ENCODE measurements at regions of chr16 and their contacts with region 1.

Region 1: GRCh38 chr16:50373780-50374179 is 5.0 kb upstream of the BRD7 start:
- DNase-seq: no peak
- H3K4me3 ChIP-seq: no peak overlapping the region
- H3K4me3 Mint-ChIP-seq: no peak overlapping the region
- H3K27ac Mint-ChIP-seq: no peak overlapping the region
- H3K4me1 ChIP-seq: peaks cover 10% of the 10 kb centered on the region; the same call in 1 of the 2 replicates
- H3K4me1 Mint-ChIP-seq: peaks cover 18% of the 10 kb centered on the region
- H3K27me3 ChIP-seq: no peaks in the 10 kb centered on the region
- H3K27me3 Mint-ChIP-seq: no peaks in the 10 kb centered on the region
- CTCF ChIP-seq: no peak

Region 2: DNA sequence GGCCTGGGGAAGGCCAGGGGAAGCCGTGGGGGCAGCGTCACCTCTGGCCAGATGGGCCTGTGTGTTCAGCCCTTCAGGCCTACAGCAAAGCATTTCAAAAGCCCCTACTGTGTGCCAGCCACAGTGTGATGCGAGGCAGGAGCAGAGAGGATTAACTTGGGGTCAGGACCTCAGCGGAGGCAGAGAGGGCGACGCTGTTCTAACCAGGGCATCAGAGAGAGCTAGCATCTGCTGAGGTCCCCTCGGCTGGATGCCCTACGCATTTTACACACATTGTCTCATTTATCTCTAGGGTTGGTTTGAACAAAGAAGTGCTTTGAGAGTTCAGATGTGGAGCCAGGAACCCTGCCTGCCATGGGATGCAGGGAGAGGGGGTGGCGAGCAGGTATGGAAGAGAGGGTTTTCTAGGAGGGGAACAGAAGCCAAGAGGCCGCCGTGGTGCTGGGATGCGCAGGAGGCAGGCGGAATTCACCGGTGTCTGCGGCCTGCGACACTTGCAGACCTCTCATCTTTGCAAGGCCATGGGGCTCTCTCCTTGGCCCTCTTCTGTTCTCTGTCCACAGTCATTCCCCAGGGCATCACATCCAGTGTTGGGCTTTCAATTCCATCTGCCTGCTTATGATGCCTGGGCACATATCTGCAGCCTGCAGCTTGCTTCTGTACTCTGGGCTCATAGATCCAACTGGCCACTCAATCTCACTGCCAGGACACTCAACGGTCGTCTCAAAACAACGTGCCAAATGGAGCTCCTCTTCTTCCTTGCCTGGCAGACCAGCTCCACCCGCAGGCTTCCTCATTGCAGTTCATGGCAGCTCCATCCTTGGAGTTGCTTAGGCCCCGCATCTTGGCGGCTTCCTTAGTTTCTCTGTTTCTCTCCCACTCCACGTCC is 166.3 kb after region 1 on chr16:
- CTCF ChIA-PET with region 1: interaction called, 10 read pairs
- POLR2A ChIA-PET with region 1: interaction called, 4 read pairs
- intact Hi-C with region 1: loop called (anchors 1 kb)
- DNase-seq: peak; percentile 42 to 47
- H3K4me3 ChIP-seq: no peak overlapping the region
- H3K4me3 Mint-ChIP-seq: no peak overlapping the region
- H3K27ac Mint-ChIP-seq: no peak overlapping the region
- H3K4me1 ChIP-seq: peaks cover 12% of the 10 kb centered on the region
- H3K4me1 Mint-ChIP-seq: peaks cover 7% of the 10 kb centered on the region
- H3K27me3 ChIP-seq: no peaks in the 10 kb centered on the region
- H3K27me3 Mint-ChIP-seq: no peaks in the 10 kb centered on the region
- CTCF ChIP-seq: peak in 1 of 2 experiments; percentile 20

Region 3: DNA sequence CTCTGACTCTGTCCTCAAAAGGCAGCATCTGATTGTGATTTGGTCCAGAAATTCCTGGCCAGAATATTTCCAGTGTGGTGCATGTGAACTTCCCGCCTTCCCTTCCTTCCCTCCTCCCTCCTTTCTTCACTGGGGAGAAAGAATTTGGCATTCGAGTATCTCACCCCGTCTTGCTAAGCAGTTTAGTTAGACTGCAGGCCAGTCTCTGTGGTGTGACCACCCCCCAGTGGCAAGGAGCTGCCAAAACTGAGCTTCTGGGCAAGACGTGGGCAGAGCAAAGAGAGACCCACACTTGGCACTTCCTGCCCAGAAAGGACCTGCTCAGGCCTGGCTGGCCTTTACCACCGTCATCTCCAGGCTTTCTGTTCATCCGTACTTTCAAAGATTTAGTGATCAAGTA is 270.9 kb after region 1 on chr16:
- CTCF ChIA-PET with region 1: interaction called, 14 read pairs
- POLR2A ChIA-PET with region 1: no interaction called
- intact Hi-C with region 1: loop called (anchors 1 kb)
- DNase-seq: peak in 1 of 2 experiments; percentile 57
- H3K4me3 ChIP-seq: no peak overlapping the region
- H3K4me3 Mint-ChIP-seq: no peak overlapping the region
- H3K27ac Mint-ChIP-seq: no peak overlapping the region
- H3K4me1 ChIP-seq: no peaks in the 10 kb centered on the region
- H3K4me1 Mint-ChIP-seq: no peaks in the 10 kb centered on the region
- H3K27me3 ChIP-seq: no peaks in the 10 kb centered on the region
- H3K27me3 Mint-ChIP-seq: no peaks in the 10 kb centered on the region
- CTCF ChIP-seq: peak; percentile 34 to 68

Measured in Caco-2 (cell line).